WTC11 (cell line): ENCODE measurements at regions of chr18 and their contacts with region 1.

Region 1: DNA sequence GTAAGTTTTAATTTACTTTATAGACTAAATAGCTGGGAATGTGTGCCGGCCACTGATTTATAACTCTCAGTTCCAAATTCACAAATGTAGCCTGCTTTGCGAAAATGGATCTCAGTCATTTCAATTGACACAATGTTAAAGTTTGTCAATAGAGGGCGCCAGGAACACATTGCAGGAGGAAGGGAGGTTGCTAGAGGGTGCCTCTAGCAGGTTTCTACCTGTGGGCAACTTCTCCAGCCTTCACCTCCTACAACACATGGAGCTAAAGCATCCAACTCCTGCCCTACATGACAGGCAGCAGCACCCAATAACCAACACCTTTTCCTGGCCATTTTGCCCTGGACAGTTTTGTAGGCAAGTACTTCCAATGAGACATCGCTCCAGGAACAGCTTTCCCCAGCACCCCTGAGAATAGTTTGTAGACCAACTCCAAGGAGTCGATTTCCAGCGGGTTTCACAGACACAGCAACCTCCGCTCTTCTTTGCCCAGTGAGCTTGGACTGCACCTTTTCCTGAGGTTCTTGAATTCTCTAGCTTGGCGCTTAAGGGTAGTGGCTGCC is 784.8 kb upstream of the CDH2 start:
- DNase-seq: peak; percentile 21
- ATAC-seq: peak; percentile 94
- H3K4me3 Mint-ChIP-seq: no peak overlapping the region
- H3K27ac Mint-ChIP-seq: no peak overlapping the region
- H3K4me1 Mint-ChIP-seq: peaks cover 14% of the 10 kb centered on the region
- H3K27me3 Mint-ChIP-seq: no peaks in the 10 kb centered on the region
- CTCF ChIP-seq: peak; percentile 45; the same call in 1 of the 2 replicates

Region 2: GRCh38 chr18:28905509-28905908 is 56.2 kb before region 1 on chr18:
- CTCF ChIA-PET with region 1: no interaction called
- POLR2A ChIA-PET with region 1: no interaction called
- DNase-seq: no peak
- ATAC-seq: no peak
- H3K4me3 Mint-ChIP-seq: no peak overlapping the region
- H3K27ac Mint-ChIP-seq: no peak overlapping the region
- H3K4me1 Mint-ChIP-seq: peaks cover 20% of the 10 kb centered on the region
- H3K27me3 Mint-ChIP-seq: no peaks in the 10 kb centered on the region; the same call in 1 of the 2 replicates
- CTCF ChIP-seq: no peak

Region 3: DNA sequence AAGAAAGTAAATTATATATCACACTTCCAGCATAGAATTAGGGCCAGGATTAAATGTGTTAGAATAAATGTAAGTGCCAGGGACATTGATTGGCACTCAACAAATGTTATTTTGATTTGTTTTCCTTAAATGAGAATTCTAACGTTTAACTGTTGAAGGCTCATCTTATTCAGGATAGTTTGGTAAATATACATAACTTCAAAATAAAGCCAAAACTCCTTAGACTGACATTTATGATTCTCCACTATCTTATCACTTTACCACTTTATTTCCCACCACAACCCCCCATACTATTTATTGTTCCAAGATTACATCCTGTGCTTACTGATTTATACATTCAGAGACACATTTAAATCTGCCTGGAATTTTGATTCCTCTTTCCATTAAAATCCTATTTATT is 15.3 kb before region 1 on chr18:
- CTCF ChIA-PET with region 1: no interaction called
- POLR2A ChIA-PET with region 1: no interaction called
- DNase-seq: no peak
- ATAC-seq: no peak
- H3K4me3 Mint-ChIP-seq: no peak overlapping the region
- H3K27ac Mint-ChIP-seq: no peak overlapping the region
- H3K4me1 Mint-ChIP-seq: no peaks in the 10 kb centered on the region
- H3K27me3 Mint-ChIP-seq: no peaks in the 10 kb centered on the region
- CTCF ChIP-seq: no peak

Region 4: GRCh38 chr18:28972333-28972907 is 10.7 kb after region 1 on chr18:
- CTCF ChIA-PET with region 1: interaction called, 10 read pairs
- POLR2A ChIA-PET with region 1: no interaction called
- DNase-seq: no peak
- ATAC-seq: no peak
- H3K4me3 Mint-ChIP-seq: no peak overlapping the region
- H3K27ac Mint-ChIP-seq: no peak overlapping the region
- H3K4me1 Mint-ChIP-seq: no peaks in the 10 kb centered on the region
- H3K27me3 Mint-ChIP-seq: no peaks in the 10 kb centered on the region
- CTCF ChIP-seq: no peak